ENCODE measurements at regions of chr12 and their contacts with region 1.

Region 1: GRCh38 chr12:7995266-7995963 is 37.1 kb upstream of the FOXJ2 start:
- DNase-seq: peak; percentile 87
- ATAC-seq: peak; percentile 99

Region 2: GRCh38 chr12:7859552-7859951 is 135.9 kb before region 1 on chr12:
- intact Hi-C with region 1: loop called (anchors 2 to 5 kb)
- DNase-seq: no peak
- ATAC-seq: no peak

Region 3: GRCh38 chr12:7933255-7933729 is 62.1 kb before region 1 on chr12:
- intact Hi-C with region 1: loop called (anchors 2 to 5 kb)
- DNase-seq: peak; percentile 80
- ATAC-seq: peak; percentile 88 to 90